ENCODE measurements at regions of chr22 and their contacts with region 1.

Region 1: GRCh38 chr22:43001271-43002201 is 13.4 kb downstream of the PACSIN2 start:
- DNase-seq: no peak
- H3K4me3 Mint-ChIP-seq: no peak overlapping the region
- H3K27ac Mint-ChIP-seq: peak overlapping the region; percentile 30
- H3K4me1 Mint-ChIP-seq: peaks cover 66% of the 10 kb centered on the region
- H3K27me3 Mint-ChIP-seq: no peaks in the 10 kb centered on the region

Region 2: DNA sequence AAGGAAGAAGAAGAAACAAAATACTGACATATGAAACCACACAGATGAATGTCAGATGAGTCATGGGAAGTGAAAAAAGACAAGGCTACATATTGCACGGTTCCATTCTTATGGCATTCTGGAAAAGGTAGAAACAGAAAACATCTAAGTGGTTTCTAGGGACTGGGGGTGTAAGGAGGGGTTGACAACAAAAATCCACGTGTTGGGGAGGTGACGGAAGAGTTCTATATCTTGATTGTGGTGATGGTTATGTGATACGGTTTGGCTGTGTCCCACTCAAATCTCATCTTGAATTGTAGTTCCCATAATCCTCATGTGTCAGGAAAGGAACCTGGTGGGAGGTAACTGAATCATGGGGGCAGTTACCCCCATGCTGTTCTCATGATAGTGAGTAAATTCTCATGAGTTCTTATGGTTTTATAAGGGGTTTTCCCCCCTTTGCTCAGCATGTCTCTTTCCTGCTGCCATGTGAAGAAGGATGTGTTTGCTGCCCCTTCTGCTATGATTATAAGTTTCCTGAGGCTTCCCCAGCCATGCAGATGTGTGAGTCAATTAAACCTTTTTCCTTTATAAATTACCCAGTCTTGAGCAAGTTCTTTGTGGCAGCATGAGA is 138.1 kb before region 1 on chr22:
- intact Hi-C with region 1: loop called (anchors 2 kb)
- DNase-seq: no peak
- H3K4me3 Mint-ChIP-seq: no peak overlapping the region
- H3K27ac Mint-ChIP-seq: peak overlapping the region; percentile 78
- H3K4me1 Mint-ChIP-seq: peaks cover 16% of the 10 kb centered on the region
- H3K27me3 Mint-ChIP-seq: no peaks in the 10 kb centered on the region

Region 3: DNA sequence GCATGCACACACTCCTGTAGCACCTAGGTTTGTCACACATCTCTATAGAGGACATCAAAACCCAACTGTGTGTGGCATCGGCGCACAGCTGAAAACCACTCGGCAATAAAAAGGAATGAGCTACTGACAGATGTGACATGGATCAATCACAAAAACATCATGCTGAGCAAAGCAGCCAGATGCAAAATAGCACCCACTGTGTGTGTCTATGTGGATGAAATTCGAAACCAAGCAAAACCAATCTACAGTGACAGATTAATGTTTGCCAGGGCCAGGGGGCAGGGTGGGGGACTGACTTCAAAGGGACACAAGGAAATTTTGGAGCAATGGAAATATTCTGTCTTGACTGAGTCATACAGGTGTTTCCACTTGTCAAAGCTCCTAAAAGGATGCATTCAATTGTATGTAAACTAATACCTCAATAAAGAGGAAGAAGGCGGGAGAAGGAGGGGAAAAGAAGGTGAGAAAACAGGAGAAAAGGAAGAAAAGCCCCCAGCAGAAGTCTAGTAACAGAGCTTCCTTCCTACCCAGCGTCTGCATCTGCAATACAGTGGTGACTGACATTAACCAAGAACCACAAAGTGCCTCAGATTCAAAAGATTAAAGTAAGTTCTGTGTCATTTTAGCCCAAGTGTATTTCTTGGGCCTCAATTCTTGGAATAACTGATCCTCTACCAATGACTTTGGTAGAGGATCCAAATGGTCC is 36.4 kb before region 1 on chr22:
- intact Hi-C with region 1: loop called (anchors 1 kb)
- DNase-seq: no peak
- H3K4me3 Mint-ChIP-seq: no peak overlapping the region
- H3K27ac Mint-ChIP-seq: peak overlapping the region; percentile 31
- H3K4me1 Mint-ChIP-seq: peaks cover 43% of the 10 kb centered on the region
- H3K27me3 Mint-ChIP-seq: no peaks in the 10 kb centered on the region

Region 4: GRCh38 chr22:42990139-42990767 is 11.3 kb before region 1 on chr22:
- intact Hi-C with region 1: no loop called
- DNase-seq: no peak
- H3K4me3 Mint-ChIP-seq: no peak overlapping the region
- H3K27ac Mint-ChIP-seq: no peak overlapping the region
- H3K4me1 Mint-ChIP-seq: peaks cover 10% of the 10 kb centered on the region
- H3K27me3 Mint-ChIP-seq: no peaks in the 10 kb centered on the region

Region 5: DNA sequence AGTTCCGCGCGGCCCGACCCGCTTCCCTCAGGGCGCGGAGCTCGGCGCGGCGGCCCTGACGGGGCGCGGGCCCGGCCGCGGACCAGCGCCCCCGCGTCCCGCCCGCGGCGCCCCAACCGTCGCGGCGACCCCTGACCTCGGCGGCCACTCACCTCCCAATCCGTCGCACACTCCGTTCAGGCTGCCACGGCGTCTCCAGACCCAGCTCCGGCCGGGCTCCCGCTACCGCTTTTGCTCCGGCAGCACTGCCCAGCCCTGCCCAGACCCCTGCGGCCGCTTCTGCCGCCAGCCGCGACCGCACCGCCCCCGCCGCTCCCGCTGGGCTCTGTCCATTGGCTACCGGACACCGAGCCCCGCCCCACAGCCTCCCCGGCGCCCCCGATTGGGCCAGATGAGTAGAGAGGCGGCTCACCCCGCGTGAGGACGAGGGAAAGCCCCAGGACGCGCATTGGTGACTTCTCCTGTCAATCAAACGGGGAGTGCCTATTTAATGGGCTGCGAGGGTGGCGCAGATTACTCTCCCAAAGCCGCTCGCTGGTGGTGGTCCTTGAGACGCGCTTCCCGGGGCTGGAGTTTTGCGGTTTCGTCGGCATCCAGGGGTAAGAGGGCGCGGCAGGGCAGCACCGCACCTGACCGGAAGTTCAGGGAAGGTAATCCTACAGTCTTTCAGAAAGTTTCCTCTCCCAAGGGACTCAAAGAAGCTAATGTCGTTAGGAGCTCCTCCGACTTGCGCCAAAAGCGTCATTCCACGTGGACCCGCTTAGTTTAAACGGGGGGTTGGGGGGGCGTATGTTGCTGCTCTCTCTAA is 13.5 kb after region 1 on chr22 and contains the start of gene PACSIN2:
- intact Hi-C with region 1: loop called (anchors 2 kb)
- DNase-seq: peak; percentile 99
- H3K4me3 Mint-ChIP-seq: peak within 1 kb of the TSS; percentile 91
- H3K27ac Mint-ChIP-seq: peak within 1 kb of the TSS; percentile 76
- H3K4me1 Mint-ChIP-seq: peaks cover 23% of the 10 kb centered on the region
- H3K27me3 Mint-ChIP-seq: peaks cover 6% of the 10 kb centered on the region
- total RNA-seq, gene PACSIN2: 30.8 and 32.5 TPM in 2 replicates

Measured in activated T-helper 2 cell treated with anti-CD3 and anti-CD28 coated beads, Interferon-gamma antibody, Interleukin-2, Interleukin-4, amounts not matched to agents 10 μg/mL and 5 μg/mL and 100 μg/mL, durations not matched to agents 14 hours and 24 hours and 36 hours (primary cell).